WTC11 (cell line): ENCODE measurements at regions of chr14 and their contacts with region 1.

Region 1: GRCh38 chr14:88189417-88190191 is 133.5 kb downstream of the KCNK10 start:
- DNase-seq: peak; percentile 83
- ATAC-seq: peak; percentile 92
- H3K4me3 Mint-ChIP-seq: peak overlapping the region; percentile 59
- H3K27ac Mint-ChIP-seq: peak overlapping the region; percentile 73
- H3K4me1 Mint-ChIP-seq: peaks cover 34% of the 10 kb centered on the region
- H3K27me3 Mint-ChIP-seq: no peaks in the 10 kb centered on the region
- CTCF ChIP-seq: no peak; the same call in none of the 2 replicates

Region 2: DNA sequence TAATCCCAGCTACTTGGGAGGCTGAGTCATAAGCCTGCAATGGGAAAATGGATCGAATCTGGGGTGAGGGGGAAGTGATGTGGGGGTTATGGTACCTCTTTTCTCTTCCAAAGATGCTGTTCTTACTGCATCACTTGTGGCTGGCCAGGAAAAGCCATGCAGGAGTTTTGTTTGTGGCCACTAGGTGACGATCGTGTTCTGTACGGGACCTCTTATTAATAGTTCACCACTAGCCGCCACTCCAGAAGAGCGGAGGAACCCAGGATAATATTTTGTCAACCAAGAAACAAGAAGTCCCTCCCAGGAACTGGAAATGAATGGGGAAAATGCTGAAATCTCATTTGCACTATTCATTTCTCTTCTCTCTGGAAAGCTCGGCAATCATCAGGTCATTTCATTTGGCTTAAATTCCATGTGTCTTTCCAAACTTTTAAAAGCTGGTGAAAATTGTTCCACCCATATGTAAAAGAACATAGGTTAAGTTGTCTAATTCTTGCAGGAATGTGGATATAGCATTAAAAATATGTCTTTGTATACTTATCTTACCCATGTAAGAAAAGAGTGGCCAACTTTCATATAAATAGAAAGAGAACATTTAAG is 175.8 kb before region 1 on chr14:
- CTCF ChIA-PET with region 1: interaction called, 31 read pairs
- POLR2A ChIA-PET with region 1: no interaction called
- DNase-seq: peak; percentile 67
- ATAC-seq: peak; percentile 97
- H3K4me3 Mint-ChIP-seq: no peak overlapping the region
- H3K27ac Mint-ChIP-seq: no peak overlapping the region
- H3K4me1 Mint-ChIP-seq: peaks cover 10% of the 10 kb centered on the region
- H3K27me3 Mint-ChIP-seq: no peaks in the 10 kb centered on the region
- CTCF ChIP-seq: peak; percentile 77

Region 3: GRCh38 chr14:88168498-88169165 is 21.0 kb before region 1 on chr14:
- CTCF ChIA-PET with region 1: interaction called, 23 read pairs
- POLR2A ChIA-PET with region 1: no interaction called
- DNase-seq: peak; percentile 58
- ATAC-seq: peak; percentile 99
- H3K4me3 Mint-ChIP-seq: no peak overlapping the region
- H3K27ac Mint-ChIP-seq: no peak overlapping the region
- H3K4me1 Mint-ChIP-seq: peaks cover 10% of the 10 kb centered on the region
- H3K27me3 Mint-ChIP-seq: no peaks in the 10 kb centered on the region; the same call in 1 of the 2 replicates
- CTCF ChIP-seq: peak; percentile 75

Region 4: GRCh38 chr14:88233915-88234314 is 44.3 kb after region 1 on chr14:
- CTCF ChIA-PET with region 1: interaction called, 69 read pairs
- POLR2A ChIA-PET with region 1: no interaction called
- DNase-seq: peak; percentile 53
- ATAC-seq: peak; percentile 96
- H3K4me3 Mint-ChIP-seq: no peak overlapping the region
- H3K27ac Mint-ChIP-seq: no peak overlapping the region
- H3K4me1 Mint-ChIP-seq: peaks cover 7% of the 10 kb centered on the region
- H3K27me3 Mint-ChIP-seq: no peaks in the 10 kb centered on the region; the same call in 1 of the 2 replicates
- CTCF ChIP-seq: peak; percentile 43; the same call in 1 of the 2 replicates

Region 5: GRCh38 chr14:88289234-88289633 is 99.6 kb after region 1 on chr14:
- CTCF ChIA-PET with region 1: interaction called, 12 read pairs
- POLR2A ChIA-PET with region 1: no interaction called
- DNase-seq: no peak
- ATAC-seq: no peak
- H3K4me3 Mint-ChIP-seq: no peak overlapping the region
- H3K27ac Mint-ChIP-seq: no peak overlapping the region
- H3K4me1 Mint-ChIP-seq: no peaks in the 10 kb centered on the region
- H3K27me3 Mint-ChIP-seq: no peaks in the 10 kb centered on the region
- CTCF ChIP-seq: no peak

Region 6: GRCh38 chr14:88380405-88380804 is 190.8 kb after region 1 on chr14:
- CTCF ChIA-PET with region 1: interaction called, 77 read pairs
- POLR2A ChIA-PET with region 1: interaction called, 3 read pairs
- DNase-seq: no peak
- ATAC-seq: peak; percentile 43
- H3K4me3 Mint-ChIP-seq: no peak overlapping the region
- H3K27ac Mint-ChIP-seq: no peak overlapping the region
- H3K4me1 Mint-ChIP-seq: peaks cover 15% of the 10 kb centered on the region
- H3K27me3 Mint-ChIP-seq: peaks cover 12% of the 10 kb centered on the region
- CTCF ChIP-seq: no peak

Region 7: DNA sequence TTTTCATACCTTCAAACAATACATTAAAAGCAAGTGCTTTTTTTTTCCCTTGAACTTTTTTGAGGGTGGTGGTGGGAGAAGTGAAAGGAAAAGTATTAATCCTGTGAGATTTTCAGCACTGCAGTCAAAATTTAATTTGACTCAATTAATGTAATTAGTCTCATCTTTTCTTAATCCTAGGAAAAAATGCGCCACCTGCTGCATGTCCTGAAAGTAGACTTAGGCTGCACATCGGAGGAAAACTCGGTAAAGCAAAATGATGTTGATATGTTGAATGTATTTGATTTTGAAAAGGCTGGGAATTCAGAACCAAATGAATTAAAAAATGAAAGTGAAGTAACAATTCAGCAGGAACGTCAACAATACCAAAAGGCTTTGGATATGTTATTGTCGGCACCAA is 248.1 kb after region 1 on chr14:
- CTCF ChIA-PET with region 1: interaction called, 14 read pairs
- POLR2A ChIA-PET with region 1: no interaction called
- DNase-seq: no peak
- ATAC-seq: no peak
- H3K4me3 Mint-ChIP-seq: no peak overlapping the region
- H3K27ac Mint-ChIP-seq: no peak overlapping the region
- H3K4me1 Mint-ChIP-seq: no peaks in the 10 kb centered on the region
- H3K27me3 Mint-ChIP-seq: no peaks in the 10 kb centered on the region
- CTCF ChIP-seq: no peak